Dendritic cell treated with granulocyte-macrophage colony-stimulating factor and Interleukin-4, amounts not matched to agents 40 ng/mL and 50 ng/mL, for 4 days (primary cell): ENCODE measurements at regions of chr11 and their contacts with region 1.

Region 1: GRCh38 chr11:88357323-88358039 is 19.9 kb upstream of the CTSC start:
- H3K4me3 Mint-ChIP-seq: no peak overlapping the region
- H3K27ac Mint-ChIP-seq: peak overlapping the region; percentile 67
- H3K4me1 Mint-ChIP-seq: peaks cover 44% of the 10 kb centered on the region
- H3K27me3 Mint-ChIP-seq: no peaks in the 10 kb centered on the region

Region 2: GRCh38 chr11:87275176-87275575 is 1082.3 kb before region 1 on chr11:
- intact Hi-C with region 1: no loop called
- H3K4me3 Mint-ChIP-seq: no peak overlapping the region
- H3K27ac Mint-ChIP-seq: no peak overlapping the region
- H3K4me1 Mint-ChIP-seq: no peaks in the 10 kb centered on the region
- H3K27me3 Mint-ChIP-seq: no peaks in the 10 kb centered on the region

Region 3: GRCh38 chr11:88402192-88402715 is 44.8 kb after region 1 on chr11:
- intact Hi-C with region 1: loop called (anchors 5 kb)
- H3K4me3 Mint-ChIP-seq: peak overlapping the region; percentile 39
- H3K27ac Mint-ChIP-seq: peak overlapping the region; percentile 83
- H3K4me1 Mint-ChIP-seq: peaks cover 40% of the 10 kb centered on the region
- H3K27me3 Mint-ChIP-seq: no peaks in the 10 kb centered on the region

Region 4: GRCh38 chr11:88414385-88414861 is 56.9 kb after region 1 on chr11:
- intact Hi-C with region 1: loop called (anchors 2 kb)
- H3K4me3 Mint-ChIP-seq: peak overlapping the region; percentile 71
- H3K27ac Mint-ChIP-seq: peak overlapping the region; percentile 99
- H3K4me1 Mint-ChIP-seq: peaks cover 65% of the 10 kb centered on the region
- H3K27me3 Mint-ChIP-seq: no peaks in the 10 kb centered on the region

Region 5: DNA sequence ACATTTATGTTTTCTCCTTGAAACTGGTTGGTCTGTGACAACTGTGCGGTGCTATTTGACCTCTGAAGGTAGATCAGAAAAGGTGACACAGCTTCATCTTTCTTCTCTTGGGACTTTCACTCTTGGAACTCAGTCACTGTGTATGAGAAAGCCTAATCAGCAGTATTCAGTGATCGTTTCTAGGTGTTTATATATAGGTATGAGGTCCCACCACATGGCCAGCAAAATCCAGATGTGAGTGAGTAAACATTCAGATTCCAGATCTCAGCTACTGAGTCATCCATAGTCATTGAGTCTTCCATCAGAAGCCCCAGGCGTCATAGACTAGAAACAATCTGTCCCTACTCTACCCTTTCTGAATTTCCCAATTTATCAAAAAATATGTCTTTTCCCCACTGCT is 97.4 kb after region 1 on chr11:
- intact Hi-C with region 1: no loop called
- H3K4me3 Mint-ChIP-seq: no peak overlapping the region
- H3K27ac Mint-ChIP-seq: no peak overlapping the region
- H3K4me1 Mint-ChIP-seq: peaks cover 21% of the 10 kb centered on the region
- H3K27me3 Mint-ChIP-seq: no peaks in the 10 kb centered on the region